ENCODE measurements at regions of chr20 and their contacts with region 1.

Region 1: GRCh38 chr20:25643716-25644115 is 19.9 kb upstream of the NANP start:
- DNase-seq: no peak
- ATAC-seq: no peak
- H3K4me3 ChIP-seq: no peak overlapping the region
- H3K27ac ChIP-seq: no peak overlapping the region
- H3K4me1 ChIP-seq: no peaks in the 10 kb centered on the region
- H3K27me3 ChIP-seq: no peaks in the 10 kb centered on the region
- CTCF ChIP-seq: no peak

Region 2: DNA sequence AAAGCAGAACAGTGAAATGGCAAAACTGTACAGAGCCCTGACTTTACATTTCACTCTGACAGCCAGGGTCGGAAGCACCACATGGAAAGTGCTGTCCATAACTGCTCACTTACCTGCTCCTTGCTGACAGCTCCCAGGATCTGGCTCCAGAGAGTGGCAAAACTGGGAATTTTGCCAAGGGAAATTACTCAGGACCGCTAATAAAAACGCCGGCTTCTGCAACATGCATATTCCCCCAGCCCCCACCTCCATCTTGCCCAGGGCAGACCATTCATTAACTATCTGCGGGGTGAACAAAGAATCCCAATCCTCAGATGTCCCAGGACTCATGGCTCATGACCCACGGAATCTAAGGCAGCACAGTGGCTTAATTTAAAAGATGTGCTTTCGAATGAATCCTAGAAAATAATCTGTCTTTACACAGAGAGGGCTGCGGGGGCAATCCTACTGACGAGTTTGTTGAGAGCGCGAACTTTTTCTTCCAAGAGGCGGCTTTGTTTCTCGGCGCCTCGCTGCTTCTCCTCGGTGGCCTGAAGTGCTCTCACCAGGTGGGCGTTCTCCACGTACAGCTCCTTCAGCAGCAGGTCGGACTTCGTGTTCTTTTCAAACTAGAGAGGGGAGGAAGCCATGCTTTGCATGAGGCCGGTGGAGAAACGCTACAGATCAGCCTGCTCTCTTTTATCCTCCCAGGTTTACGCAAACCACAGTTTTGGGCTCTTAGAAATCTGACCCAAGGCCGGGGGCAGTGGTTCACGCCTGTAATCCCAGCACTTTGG is 190.5 kb before region 1 on chr20:
- intact Hi-C with region 1: no loop called
- DNase-seq: no peak
- ATAC-seq: peak in 4 of 8 donors; percentile 35 to 70 (median 60)
- H3K4me3 ChIP-seq: no peak overlapping the region
- H3K27ac ChIP-seq: no peak overlapping the region
- H3K4me1 ChIP-seq: peaks cover 0 to 10% (median 0%) of the 10 kb centered on the region in 9 donors
- H3K27me3 ChIP-seq: no peaks in the 10 kb centered on the region
- CTCF ChIP-seq: no peak

Region 3: DNA sequence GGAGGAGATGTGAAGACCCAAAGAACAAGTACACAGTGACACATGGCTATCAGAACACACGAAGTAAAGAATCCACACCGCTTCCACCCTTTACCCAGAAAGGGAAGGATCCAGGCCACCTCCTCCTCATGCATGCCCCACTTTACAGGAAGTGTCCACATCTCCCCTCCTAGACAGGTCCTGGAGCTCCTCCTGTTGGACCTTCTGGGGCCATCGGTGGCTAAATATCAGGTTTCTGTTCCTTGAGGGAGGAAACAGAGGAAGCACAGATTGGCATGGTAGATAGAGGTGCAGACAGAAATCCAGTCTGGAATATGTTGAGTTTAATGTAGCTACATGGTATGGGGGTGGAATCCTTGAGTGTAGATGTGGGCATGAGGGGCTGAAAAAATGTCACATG is 69.3 kb before region 1 on chr20:
- intact Hi-C with region 1: loop called in 1 of 10 experiments (anchors 10 kb)
- DNase-seq: no peak
- ATAC-seq: no peak
- H3K4me3 ChIP-seq: no peak overlapping the region
- H3K27ac ChIP-seq: no peak overlapping the region
- H3K4me1 ChIP-seq: no peaks in the 10 kb centered on the region
- H3K27me3 ChIP-seq: no peaks in the 10 kb centered on the region
- CTCF ChIP-seq: no peak

Measured in heart right ventricle (tissue), 16 donors.